ENCODE measurements at regions of chr2 and their contacts with region 1.

Region 1: DNA sequence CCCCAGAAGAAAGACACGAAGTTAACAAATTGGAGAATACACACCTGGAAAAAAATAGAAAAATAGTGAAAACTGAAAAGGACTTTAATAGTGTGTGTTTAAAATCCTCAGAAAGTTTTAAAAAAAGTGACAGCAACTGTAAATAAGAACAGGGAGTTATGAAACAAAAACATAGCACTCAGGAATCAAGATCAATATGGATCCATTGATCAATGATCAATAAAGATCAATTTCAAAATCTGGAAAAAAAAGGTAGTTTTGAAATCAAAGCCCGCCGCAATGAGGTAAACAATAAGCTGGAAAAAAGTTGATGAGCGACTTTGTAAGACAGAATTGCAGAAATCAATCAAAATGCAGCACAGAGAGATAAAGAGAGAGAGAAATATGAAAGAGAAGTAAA is 64.5 kb upstream of the ARL4C start:
- DNase-seq: no peak
- ATAC-seq: no peak
- H3K4me3 Mint-ChIP-seq: no peak overlapping the region
- H3K27ac Mint-ChIP-seq: no peak overlapping the region
- H3K4me1 Mint-ChIP-seq: peaks cover 27% of the 10 kb centered on the region
- H3K27me3 Mint-ChIP-seq: no peaks in the 10 kb centered on the region
- CTCF ChIP-seq: no peak

Region 2: DNA sequence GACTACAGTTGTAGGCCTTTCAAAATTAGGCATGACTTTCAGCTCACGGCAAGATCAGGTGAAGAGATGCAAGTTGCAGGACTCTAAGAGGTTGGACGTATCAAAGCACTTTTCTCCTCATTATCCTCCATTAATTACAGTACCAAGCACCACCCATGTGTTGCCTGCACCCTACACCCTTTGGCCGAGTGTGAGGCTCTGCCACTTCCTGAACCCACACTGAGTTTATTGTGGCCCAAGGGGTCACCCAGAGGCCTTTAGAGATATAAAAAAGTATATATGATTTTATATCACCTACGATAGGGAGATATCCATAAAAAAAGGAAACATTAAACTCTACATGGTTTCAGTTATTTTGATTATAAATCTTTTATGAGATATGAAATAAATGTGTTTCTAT is 941.1 kb before region 1 on chr2:
- CTCF ChIA-PET with region 1: no interaction called
- POLR2A ChIA-PET with region 1: no interaction called
- intact Hi-C with region 1: no loop called
- DNase-seq: no peak
- ATAC-seq: no peak
- H3K4me3 Mint-ChIP-seq: no peak overlapping the region
- H3K27ac Mint-ChIP-seq: no peak overlapping the region
- H3K4me1 Mint-ChIP-seq: no peaks in the 10 kb centered on the region
- H3K27me3 Mint-ChIP-seq: peaks cover 32% of the 10 kb centered on the region
- CTCF ChIP-seq: no peak

Region 3: DNA sequence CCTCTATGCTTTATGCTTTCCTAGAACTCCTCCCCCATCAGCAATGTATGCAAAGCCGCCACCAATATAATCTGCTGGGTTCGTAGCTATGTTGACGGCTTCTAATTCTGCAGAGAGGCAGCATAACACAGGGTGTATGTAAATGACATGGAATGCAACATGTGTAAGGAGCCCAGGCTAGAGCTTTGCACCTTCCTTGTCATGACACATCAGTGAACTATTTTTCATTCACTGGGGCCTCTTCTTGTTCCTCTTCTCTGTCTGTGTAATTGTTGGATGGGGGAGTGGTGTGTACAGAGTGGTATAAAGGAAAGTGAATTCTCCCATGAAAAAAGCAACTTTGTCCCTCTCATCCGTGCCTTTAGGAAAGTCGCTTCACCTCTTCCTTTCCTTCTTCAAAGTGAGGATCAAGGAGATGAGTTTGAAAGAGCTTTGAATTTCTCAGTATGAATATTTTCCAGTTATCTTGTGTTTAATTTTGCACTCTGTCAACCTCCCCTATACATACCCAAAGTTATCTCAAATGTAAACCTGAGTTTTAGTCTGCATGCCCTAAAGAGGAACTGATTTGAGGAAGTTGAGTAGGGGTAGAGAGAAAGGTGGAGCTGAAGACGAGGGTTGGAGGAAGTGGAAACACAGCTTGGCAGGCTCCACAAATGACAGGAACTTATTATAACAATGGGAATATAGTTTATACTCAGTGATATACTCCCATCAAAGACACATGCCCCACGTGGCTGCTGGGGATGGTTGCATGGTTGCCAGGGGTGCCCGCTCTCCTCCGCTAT is 10.5 kb after region 1 on chr2:
- CTCF ChIA-PET with region 1: no interaction called
- POLR2A ChIA-PET with region 1: interaction called, 13 read pairs
- intact Hi-C with region 1: no loop called
- DNase-seq: no peak
- ATAC-seq: peak; percentile 91
- H3K4me3 Mint-ChIP-seq: peak overlapping the region; percentile 36
- H3K27ac Mint-ChIP-seq: peak overlapping the region; percentile 73
- H3K4me1 Mint-ChIP-seq: peaks cover 79% of the 10 kb centered on the region
- H3K27me3 Mint-ChIP-seq: no peaks in the 10 kb centered on the region
- CTCF ChIP-seq: no peak

Region 4: DNA sequence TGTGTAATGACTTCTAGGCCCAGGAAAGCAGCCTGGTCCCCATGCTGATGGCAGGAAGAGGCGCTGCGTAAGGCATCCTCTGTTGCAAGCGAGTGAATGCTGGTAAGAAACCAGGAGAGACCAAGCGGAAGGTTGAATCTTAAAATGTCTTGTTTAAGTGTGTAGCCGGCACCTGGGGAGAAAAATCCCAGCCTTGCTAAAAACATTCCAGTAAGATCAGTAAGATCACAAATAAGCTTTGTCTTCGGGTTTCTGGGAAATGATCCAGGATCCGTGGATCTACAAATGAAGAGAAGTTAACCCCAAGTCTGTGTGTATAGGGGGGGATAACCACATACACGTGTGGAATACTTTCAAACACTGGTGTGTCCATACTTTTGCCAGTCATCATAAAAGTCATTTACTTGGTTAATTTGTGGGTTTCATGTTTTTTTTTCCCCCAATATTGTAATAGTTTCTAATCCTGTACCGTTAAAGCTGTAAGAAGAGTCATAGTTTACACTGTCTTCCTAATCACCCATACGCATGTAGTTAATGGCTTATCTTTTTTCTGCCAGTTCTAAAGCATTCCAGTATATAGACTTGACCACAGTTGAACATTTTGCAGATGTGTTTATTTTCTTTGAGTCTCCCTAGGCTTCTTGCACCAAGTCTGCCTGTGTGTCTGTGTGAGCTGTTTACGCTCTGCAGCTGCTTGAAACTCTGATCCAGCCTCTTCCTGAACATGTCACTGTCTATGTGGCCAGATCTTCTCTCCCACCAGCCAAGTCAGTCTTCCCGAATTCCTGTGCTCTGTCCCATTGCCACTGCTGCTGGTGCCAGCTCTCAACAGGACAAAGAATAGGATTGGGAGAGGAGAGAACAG is 71.4 kb after region 1 on chr2:
- CTCF ChIA-PET with region 1: no interaction called
- POLR2A ChIA-PET with region 1: no interaction called
- intact Hi-C with region 1: no loop called
- DNase-seq: no peak
- ATAC-seq: no peak
- H3K4me3 Mint-ChIP-seq: no peak overlapping the region
- H3K27ac Mint-ChIP-seq: no peak overlapping the region
- H3K4me1 Mint-ChIP-seq: no peaks in the 10 kb centered on the region
- H3K27me3 Mint-ChIP-seq: peaks cover 6% of the 10 kb centered on the region
- CTCF ChIP-seq: no peak

Measured in activated B cell treated with CpG ODN at 0.5 μM for 24 hours (primary cell).